ENCODE measurements at regions of chr15 and their contacts with region 1.

Region 1: DNA sequence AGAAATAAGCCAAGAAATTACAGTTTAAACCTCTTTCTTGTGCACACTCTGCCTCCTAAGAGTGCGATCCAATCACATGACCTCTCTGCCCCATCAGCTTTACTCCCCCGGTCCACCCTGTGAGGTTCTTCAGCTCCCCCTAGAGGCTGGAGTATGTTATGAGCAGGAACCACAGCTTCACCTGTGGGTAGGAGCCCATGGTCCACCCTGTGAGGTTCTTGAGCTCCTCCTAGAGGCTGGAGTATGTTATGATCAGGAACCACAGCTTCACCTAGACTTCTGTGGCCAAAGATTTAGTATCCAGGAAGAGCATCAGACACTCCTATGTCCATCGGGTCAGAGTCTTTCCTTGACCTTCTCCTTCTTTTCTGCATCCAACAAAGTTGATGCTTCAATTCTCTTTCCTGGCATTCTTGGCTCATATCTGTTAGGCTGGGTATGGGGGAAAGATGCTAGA is 163.9 kb downstream of the MINAR1 start:
- DNase-seq: peak; percentile 91 to 96 (median 95)
- ATAC-seq: peak; percentile 100
- H3K4me3 ChIP-seq: no peak overlapping the region
- H3K27ac ChIP-seq: no peak overlapping the region
- H3K4me1 ChIP-seq: no peaks in the 10 kb centered on the region
- H3K27me3 ChIP-seq: peaks cover 2 to 5% of the 10 kb centered on the region in 2 experiments; a peak in 1 of 5 replicates
- CTCF ChIP-seq: peak; percentile 99 to 100 (median 100)
- EP300 ChIP-seq: no peak
- POLR2A ChIP-seq: no peak
- RAD21 ChIP-seq: peak; percentile 80 to 94

Region 2: GRCh38 chr15:79339564-79340314 is 256.3 kb before region 1 on chr15:
- CTCF ChIA-PET with region 1: interaction called, 28 read pairs
- POLR2A ChIA-PET with region 1: interaction called, 3 read pairs
- in situ Hi-C with region 1: no loop called
- intact Hi-C with region 1: loop called (anchors 1 kb)
- DNase-seq: peak; percentile 31 to 49 (median 44)
- ATAC-seq: peak; percentile 71
- H3K4me3 ChIP-seq: no peak overlapping the region
- H3K27ac ChIP-seq: no peak overlapping the region
- H3K4me1 ChIP-seq: no peaks in the 10 kb centered on the region
- H3K27me3 ChIP-seq: no peaks in the 10 kb centered on the region
- CTCF ChIP-seq: peak; percentile 64 to 88 (median 80)
- EP300 ChIP-seq: no peak
- POLR2A ChIP-seq: no peak
- RAD21 ChIP-seq: peak; percentile 71 to 79

Region 3: DNA sequence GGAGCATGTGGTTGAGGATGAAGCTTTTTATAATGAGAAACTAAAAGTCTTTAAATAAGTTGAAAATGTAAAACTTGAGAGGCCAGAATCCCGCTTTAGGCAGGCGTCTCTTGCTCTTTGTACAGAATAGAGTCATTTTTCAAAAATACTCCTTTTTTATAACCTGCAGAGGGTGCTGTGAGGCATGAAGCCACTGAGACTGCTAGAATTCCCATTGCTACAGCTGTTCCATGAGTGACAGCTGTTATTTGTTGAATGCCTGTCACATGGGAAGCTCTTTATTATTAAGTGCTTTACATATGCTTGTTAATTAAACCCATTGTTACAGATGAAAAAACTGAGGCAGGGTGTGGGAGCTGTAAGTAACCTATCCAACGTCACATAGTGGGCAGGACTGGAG is 145.4 kb before region 1 on chr15:
- CTCF ChIA-PET with region 1: interaction called, 5 read pairs
- POLR2A ChIA-PET with region 1: no interaction called
- in situ Hi-C with region 1: no loop called
- intact Hi-C with region 1: loop called (anchors 1 kb)
- DNase-seq: peak in 3 of 4 experiments; percentile 12 to 14 (median 13)
- ATAC-seq: 0 out of 3 replicates have a peak, but pooled peaks have one; percentile 43
- H3K4me3 ChIP-seq: no peak overlapping the region
- H3K27ac ChIP-seq: no peak overlapping the region
- H3K4me1 ChIP-seq: no peaks in the 10 kb centered on the region
- H3K27me3 ChIP-seq: peaks cover 9 to 21% of the 10 kb centered on the region in 2 experiments; a peak in 4 of 5 replicates
- CTCF ChIP-seq: peak; percentile 22 to 38 (median 34); a peak in 4 of 6 replicates
- EP300 ChIP-seq: no peak
- POLR2A ChIP-seq: no peak
- RAD21 ChIP-seq: peak in 1 of 2 experiments; percentile 41; a peak in 2 of 4 replicates

Measured in K562 (cell line).